PC-3 (cell line): ENCODE measurements at regions of chr5 and their contacts with region 1.

Region 1: DNA sequence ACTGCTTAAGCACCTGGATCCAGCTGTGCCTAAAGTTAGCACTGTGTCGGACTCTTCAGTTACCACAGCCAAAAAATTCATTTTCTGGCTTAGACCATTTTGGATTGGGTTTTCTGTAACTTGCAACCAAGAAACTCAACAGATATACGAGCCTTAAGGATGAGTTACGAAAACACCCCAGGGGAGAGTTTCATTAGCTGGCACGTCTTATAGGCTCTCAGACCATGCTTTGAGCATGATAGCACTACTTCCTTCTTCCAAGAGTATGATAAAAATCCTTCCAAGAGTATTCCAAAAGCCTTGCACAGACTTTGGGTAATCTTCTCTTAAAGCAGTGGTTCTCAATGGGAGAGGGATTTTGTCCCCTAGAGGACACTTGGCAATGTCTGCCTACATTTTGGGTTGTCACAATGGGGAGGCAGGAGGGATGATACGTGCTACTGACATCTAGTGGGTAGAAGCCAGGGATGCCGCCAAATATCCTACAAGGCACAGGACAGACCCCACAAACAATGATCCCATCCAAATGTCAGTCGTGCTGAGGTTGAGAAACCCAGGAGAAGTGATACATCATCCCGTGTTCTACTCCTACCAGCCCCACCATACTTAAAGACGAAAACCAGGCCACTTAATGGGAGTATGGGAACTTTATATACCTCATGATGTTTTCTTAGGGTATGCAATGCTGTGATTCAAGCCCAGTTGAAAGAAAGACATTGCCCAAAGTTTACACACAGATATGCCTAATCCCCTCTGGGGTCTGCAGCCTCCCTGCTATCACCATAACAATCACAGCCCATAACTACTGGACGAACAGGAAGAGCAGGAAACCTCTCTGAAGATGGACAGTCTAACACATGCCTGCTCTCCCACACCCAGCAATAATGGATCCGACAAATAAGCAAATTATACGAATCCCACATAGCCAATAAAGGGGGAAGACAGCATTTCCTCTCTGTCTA is 65.0 kb downstream of the SMIM23 start:
- DNase-seq: peak; percentile 59
- ATAC-seq: peak; percentile 71
- H3K4me3 ChIP-seq: no peak overlapping the region
- H3K27ac ChIP-seq: no peak overlapping the region
- H3K4me1 ChIP-seq: no peaks in the 10 kb centered on the region
- H3K27me3 ChIP-seq: no peaks in the 10 kb centered on the region
- CTCF ChIP-seq: peak; percentile 78

Region 2: GRCh38 chr5:170225326-170226128 is 1625.1 kb before region 1 on chr5:
- CTCF ChIA-PET with region 1: no interaction called
- POLR2A ChIA-PET with region 1: no interaction called
- intact Hi-C with region 1: no loop called
- DNase-seq: peak; percentile 76
- ATAC-seq: peak; percentile 90
- H3K4me3 ChIP-seq: no peak overlapping the region
- H3K27ac ChIP-seq: no peak overlapping the region
- H3K4me1 ChIP-seq: peaks cover 11% of the 10 kb centered on the region
- H3K27me3 ChIP-seq: no peaks in the 10 kb centered on the region
- CTCF ChIP-seq: peak; percentile 78

Region 3: DNA sequence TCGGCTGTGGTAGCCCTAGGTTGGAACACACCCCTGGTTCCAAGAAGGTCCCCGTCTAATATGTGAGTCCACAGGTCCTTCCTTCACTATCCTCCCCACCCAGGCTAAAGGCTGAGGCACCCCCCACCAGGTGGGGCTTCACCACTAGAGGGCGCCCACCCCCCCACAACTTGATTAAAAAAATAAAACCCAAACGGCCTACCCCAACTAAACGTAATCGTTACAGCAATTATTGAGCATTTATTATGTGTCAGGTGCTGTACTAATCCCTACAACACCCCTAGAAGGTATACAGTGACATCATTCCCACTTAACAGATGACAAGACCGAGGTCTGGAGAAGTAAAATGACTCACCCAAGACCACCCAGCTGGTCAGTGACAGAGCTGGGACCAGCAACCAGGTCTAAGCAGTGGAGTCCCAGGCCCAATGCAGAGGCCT is 366.1 kb before region 1 on chr5:
- CTCF ChIA-PET with region 1: no interaction called
- POLR2A ChIA-PET with region 1: no interaction called
- intact Hi-C with region 1: loop called (anchors 10 kb)
- DNase-seq: peak; percentile 50
- ATAC-seq: peak; percentile 45; the same call in 1 of the 2 replicates
- H3K4me3 ChIP-seq: no peak overlapping the region
- H3K27ac ChIP-seq: no peak overlapping the region
- H3K4me1 ChIP-seq: no peaks in the 10 kb centered on the region
- H3K27me3 ChIP-seq: peaks cover 13% of the 10 kb centered on the region
- CTCF ChIP-seq: peak; percentile 98

Region 4: GRCh38 chr5:171630027-171630669 is 220.5 kb before region 1 on chr5:
- CTCF ChIA-PET with region 1: no interaction called
- POLR2A ChIA-PET with region 1: no interaction called
- intact Hi-C with region 1: loop called (anchors 2 kb)
- DNase-seq: peak; percentile 68
- ATAC-seq: peak; percentile 98
- H3K4me3 ChIP-seq: peak overlapping the region; percentile 51
- H3K27ac ChIP-seq: no peak overlapping the region
- H3K4me1 ChIP-seq: 0 out of 2 replicates have a peak, but pooled peaks cover 5% of the 10 kb centered on the region
- H3K27me3 ChIP-seq: peaks cover 56% of the 10 kb centered on the region
- CTCF ChIP-seq: peak; percentile 57